ENCODE measurements at regions of chr15 and their contacts with region 1.

Region 1: DNA sequence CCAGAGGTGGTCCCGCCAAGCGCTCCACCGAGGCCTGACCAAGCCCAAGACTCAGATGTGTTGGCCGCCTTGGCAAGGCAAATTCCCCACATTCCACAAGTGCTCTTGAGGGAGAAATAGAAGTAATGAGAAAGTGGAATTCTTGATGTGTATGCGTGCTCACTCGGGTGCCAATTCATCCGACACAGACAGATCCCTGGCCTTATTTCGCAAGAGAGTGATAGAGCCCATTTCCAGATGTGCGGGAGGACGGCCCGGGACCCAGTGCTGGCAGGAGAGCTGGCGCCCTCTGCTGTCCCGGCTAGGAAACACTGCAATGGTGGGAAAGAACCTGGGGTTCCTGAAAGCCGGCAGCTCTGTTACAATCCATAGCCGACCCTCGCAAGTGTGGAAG is 76.0 kb downstream of the HMG20A start:
- DNase-seq: peak; percentile 81
- CTCF ChIP-seq: peak; percentile 90

Region 2: GRCh38 chr15:77112838-77113504 is 383.7 kb before region 1 on chr15:
- CTCF ChIA-PET with region 1: interaction called, 67 read pairs
- POLR2A ChIA-PET with region 1: no interaction called
- DNase-seq: no peak
- CTCF ChIP-seq: no peak

Region 3: DNA sequence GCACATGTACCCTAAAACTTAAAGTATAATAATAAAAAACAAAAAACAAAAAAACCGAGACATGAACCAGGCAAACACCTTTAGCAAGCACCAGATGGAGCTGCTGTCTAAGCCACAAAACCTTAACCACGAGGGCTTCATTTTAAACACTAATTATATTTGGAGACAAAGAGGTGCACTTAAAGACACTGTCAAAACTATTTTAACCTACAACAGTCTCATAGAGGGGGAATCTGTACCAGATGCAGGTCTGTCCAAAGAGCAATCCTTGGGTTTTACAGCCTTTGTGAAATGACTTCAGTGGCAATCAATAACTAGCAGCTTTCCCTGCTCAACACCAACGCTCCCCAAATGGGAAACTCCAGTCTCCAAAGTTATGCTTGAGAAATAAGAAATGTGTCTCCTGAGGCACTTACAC is 310.1 kb before region 1 on chr15:
- CTCF ChIA-PET with region 1: interaction called, 176 read pairs
- POLR2A ChIA-PET with region 1: no interaction called
- DNase-seq: peak; percentile 25
- CTCF ChIP-seq: peak; percentile 69

Region 4: GRCh38 chr15:77387365-77388105 is 109.2 kb before region 1 on chr15:
- CTCF ChIA-PET with region 1: no interaction called
- POLR2A ChIA-PET with region 1: no interaction called
- DNase-seq: no peak
- CTCF ChIP-seq: no peak

Region 5: DNA sequence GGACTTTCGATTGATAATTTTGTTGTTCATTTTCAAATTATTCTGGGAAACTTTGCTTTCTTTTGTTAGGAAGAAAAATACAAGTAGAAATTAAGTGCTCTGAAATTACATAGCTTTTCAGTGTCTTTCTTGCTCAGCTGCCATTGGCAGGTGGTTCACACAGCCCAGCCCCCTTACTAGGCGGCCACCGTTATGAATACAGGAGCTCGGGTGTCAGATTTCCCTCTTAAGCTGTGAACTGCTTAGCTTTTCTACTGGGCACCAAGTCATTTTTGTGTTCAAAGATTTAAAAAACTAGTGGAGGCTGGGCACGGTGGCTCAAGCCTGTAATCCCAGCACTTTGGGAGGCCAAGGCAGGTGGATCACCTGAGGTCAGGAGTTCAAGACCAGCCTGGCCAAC is 20.8 kb before region 1 on chr15:
- CTCF ChIA-PET with region 1: interaction called, 54 read pairs
- POLR2A ChIA-PET with region 1: no interaction called
- DNase-seq: no peak
- CTCF ChIP-seq: no peak

Region 6: GRCh38 chr15:77507911-77508310 is 11.2 kb after region 1 on chr15:
- CTCF ChIA-PET with region 1: interaction called, 27 read pairs
- POLR2A ChIA-PET with region 1: no interaction called
- DNase-seq: no peak
- CTCF ChIP-seq: no peak

Region 7: GRCh38 chr15:77633134-77633912 is 136.6 kb after region 1 on chr15:
- CTCF ChIA-PET with region 1: no interaction called
- POLR2A ChIA-PET with region 1: no interaction called
- DNase-seq: peak; percentile 93
- CTCF ChIP-seq: peak; percentile 100

Region 8: DNA sequence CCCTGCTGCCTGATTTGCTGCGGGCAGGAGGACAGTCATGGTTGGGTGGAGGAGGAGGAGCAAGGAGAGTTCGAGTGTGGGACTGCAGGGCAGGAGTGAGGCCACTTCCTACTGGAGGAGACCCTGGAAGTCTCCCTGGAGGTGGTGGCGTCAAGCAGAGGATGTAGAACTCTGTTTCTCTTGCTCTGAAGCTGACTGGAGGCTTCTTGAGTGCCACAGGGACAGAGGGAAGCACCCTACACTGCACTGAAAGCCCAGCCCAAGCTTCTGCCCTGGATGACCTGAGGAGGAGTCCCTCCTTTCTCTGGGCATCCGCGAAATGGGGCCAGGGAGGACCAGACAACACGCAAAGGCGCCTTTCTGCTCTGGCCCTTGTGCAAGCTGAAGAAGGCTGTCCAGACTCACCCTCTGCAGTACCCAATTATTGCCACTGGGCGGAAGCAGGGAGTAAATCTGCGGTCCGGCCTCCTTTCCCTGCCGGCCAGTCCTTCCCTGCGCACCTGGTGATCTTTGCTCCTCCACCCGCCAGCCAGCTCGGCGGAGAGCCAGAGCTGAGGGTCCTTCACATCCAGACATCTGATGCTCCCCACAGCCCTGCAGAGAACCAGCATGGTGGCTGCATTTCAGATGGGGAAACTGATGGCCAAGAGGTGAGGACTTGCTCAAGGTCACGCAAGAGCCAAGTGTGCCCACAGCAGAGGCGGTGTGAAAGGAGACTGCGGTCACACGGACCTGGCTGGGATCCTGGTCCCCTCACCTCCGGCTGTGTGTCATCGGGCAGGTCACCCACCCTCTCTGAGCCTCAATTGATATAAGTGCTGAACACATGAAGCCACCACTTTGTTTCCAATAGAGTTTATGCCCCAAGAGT is 373.7 kb after region 1 on chr15:
- CTCF ChIA-PET with region 1: no interaction called
- POLR2A ChIA-PET with region 1: no interaction called
- DNase-seq: peak; percentile 75
- CTCF ChIP-seq: peak; percentile 87